PC-9 (cell line): ENCODE measurements at regions of chr5 and their contacts with region 1.

Region 1: DNA sequence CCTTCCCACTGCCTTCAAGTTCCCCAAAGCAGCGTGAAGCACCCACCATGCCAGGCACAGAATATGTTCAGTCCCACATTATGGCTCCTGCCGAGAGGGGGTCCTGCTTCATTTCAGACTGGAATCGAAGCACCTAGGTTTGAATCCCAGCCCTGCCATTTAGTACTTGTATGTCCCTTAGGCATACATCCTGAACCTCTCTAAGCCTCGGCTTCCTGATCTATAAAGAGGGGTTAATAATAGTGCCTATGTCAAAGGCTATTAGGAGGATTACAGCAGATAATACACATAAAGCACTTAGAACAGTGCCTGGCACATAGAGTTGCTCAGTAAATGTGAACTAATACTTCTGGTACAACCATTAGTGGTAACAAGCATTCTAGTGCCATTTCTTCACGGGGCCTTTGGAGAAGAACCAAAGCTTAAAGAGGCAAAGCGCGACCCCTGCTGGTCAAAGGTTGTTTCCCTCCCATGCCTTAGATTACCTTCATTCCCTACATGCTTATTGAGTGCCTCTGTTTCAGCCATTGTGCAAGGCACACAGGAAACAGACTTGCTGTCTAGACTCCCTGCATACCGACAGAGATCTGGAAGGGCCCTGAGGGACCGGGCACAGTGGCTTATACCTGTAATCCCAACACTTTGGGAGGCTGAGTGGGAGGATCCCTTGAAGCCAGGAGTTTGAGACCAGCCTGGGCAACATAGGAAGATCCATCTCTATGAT is 98.2 kb downstream of the PPARGC1B start:
- DNase-seq: peak; percentile 75 to 87
- H3K4me3 ChIP-seq: no peak overlapping the region
- H3K27ac ChIP-seq: no peak overlapping the region
- H3K4me1 ChIP-seq: no peaks in the 10 kb centered on the region
- H3K27me3 ChIP-seq: no peaks in the 10 kb centered on the region
- CTCF ChIP-seq: peak; percentile 93

Region 2: GRCh38 chr5:149367249-149367971 is 460.9 kb before region 1 on chr5:
- CTCF ChIA-PET with region 1: no interaction called
- POLR2A ChIA-PET with region 1: no interaction called
- intact Hi-C with region 1: loop called (anchors 2 kb)
- DNase-seq: peak; percentile 64 to 76
- H3K4me3 ChIP-seq: no peak overlapping the region
- H3K27ac ChIP-seq: no peak overlapping the region
- H3K4me1 ChIP-seq: no peaks in the 10 kb centered on the region
- H3K27me3 ChIP-seq: no peaks in the 10 kb centered on the region
- CTCF ChIP-seq: peak; percentile 84

Region 3: DNA sequence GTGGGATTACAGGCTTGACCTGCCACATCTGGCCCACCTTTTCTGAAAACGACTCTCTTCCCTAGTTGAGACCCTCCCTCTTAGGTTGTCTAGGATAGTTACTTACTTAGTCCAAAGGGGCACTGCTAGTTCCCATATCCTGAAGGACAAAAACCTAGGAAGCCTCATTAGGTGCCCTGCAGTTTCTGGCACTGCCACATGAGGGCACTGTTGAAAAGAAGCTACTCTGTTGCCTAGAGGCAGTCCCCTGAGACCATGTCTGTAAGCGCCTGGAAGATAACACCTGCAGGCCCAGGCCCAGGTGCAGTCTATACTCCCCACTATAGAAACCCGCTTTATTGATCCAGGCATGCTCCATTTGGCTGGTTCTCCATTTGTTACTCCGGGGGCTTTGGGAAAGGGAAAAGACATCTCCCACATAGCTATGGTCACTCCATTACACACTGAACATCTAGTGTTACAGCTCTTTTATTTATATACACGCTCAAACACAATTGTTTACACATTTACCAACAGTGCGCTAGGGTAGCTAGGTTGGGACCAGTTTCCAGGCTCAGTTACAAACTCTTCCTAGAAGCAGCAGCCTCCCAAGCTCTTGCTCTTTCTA is 171.6 kb before region 1 on chr5:
- CTCF ChIA-PET with region 1: interaction called, 4 read pairs
- POLR2A ChIA-PET with region 1: no interaction called
- intact Hi-C with region 1: loop called (anchors 1 kb)
- DNase-seq: peak in 1 of 2 experiments; percentile 48
- H3K4me3 ChIP-seq: no peak overlapping the region
- H3K27ac ChIP-seq: no peak overlapping the region
- H3K4me1 ChIP-seq: no peaks in the 10 kb centered on the region
- H3K27me3 ChIP-seq: no peaks in the 10 kb centered on the region
- CTCF ChIP-seq: peak; percentile 88

Region 4: GRCh38 chr5:149667084-149667828 is 161.1 kb before region 1 on chr5:
- CTCF ChIA-PET with region 1: interaction called, 5 read pairs
- POLR2A ChIA-PET with region 1: no interaction called
- intact Hi-C with region 1: loop called (anchors 1 kb)
- DNase-seq: peak in 1 of 2 experiments; percentile 18
- H3K4me3 ChIP-seq: no peak overlapping the region
- H3K27ac ChIP-seq: no peak overlapping the region
- H3K4me1 ChIP-seq: no peaks in the 10 kb centered on the region
- H3K27me3 ChIP-seq: no peaks in the 10 kb centered on the region
- CTCF ChIP-seq: peak; percentile 92

Region 5: DNA sequence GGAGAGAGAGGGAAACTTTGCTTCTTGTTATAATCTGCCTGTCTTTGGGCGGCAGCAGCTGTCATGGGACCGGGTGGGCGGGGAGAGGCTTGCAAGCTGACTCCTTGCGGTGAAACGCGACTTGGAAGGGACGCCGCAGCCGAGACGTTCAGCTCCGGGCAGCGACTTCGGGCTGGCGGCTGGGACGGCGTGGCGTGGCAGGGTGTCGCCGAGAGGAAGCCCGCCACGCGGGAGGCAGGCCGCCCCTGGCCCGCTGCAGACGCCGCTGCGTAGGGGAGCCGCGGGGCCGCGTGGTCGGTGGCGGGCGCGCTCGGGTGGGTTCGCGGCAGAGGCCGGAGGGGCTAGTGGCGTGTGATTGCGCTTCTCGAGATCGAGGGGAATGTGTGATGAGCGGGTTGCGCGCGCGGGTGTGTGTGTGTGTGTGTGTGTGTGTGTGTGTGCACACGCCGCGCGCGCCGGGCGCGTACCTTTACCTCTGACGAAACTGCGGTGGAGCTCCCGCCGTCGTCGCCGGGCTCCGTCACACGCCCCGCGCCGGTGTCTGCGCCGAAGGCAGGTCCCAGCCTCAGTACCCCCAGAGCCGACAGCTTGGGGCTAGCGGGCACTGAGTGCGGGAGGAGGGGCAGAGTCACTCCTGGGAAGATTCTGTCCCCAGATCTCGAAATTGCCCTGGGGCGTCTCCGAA is 96.5 kb before region 1 on chr5:
- CTCF ChIA-PET with region 1: no interaction called
- POLR2A ChIA-PET with region 1: interaction called, 5 read pairs
- intact Hi-C with region 1: loop called (anchors 1 kb)
- DNase-seq: peak; percentile 59 to 68
- H3K4me3 ChIP-seq: peak overlapping the region; percentile 94
- H3K27ac ChIP-seq: no peak overlapping the region
- H3K4me1 ChIP-seq: peaks cover 15% of the 10 kb centered on the region
- H3K27me3 ChIP-seq: no peaks in the 10 kb centered on the region
- CTCF ChIP-seq: no peak

Region 6: DNA sequence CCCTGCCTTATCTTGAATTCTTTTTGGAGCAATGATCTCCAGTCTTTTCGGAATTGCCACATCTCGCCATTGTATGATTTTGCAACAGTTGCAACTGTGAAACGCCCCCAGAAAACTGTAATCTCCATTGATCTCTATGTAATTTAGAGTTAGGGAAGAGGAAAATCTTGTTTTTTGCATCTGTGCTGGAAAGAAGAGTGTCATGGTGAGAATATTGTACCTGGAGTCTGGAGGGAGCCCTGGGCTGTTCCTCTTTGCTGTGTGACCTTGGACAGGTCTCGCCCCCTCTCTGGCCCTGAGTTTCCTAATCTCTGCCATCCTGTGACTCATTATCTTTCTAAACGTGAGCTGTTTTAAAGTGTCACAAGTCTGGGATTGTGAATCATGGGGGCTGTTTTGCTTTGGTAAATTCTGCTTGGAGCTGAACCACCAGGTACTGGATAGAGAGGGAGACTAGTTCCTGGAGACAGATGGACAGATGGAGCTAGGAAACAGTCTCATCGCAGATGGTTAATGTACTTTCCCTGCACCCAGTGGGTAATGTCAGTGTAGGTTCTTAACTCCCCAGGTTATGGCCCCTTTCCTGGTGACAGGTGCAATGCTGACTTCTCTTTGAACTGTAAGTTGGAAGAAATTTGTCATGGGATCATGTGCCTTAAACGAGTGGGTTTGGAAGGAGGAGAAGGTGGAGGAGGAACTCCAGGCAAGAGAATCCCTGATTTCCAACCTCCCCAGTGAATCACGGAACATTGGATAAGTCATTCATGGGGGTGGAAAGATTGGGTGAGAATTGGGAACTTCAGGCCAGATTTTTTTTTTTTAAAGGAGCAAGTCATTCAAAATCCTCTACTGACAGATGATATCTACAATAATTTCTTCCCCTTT is 78.6 kb before region 1 on chr5:
- CTCF ChIA-PET with region 1: interaction called, 3 read pairs
- POLR2A ChIA-PET with region 1: no interaction called
- intact Hi-C with region 1: loop called (anchors 5 kb)
- DNase-seq: peak in 1 of 2 experiments; percentile 48
- H3K4me3 ChIP-seq: no peak overlapping the region
- H3K27ac ChIP-seq: peak overlapping the region; percentile 24
- H3K4me1 ChIP-seq: peaks cover 59% of the 10 kb centered on the region
- H3K27me3 ChIP-seq: no peaks in the 10 kb centered on the region
- CTCF ChIP-seq: no peak

Region 7: GRCh38 chr5:149951135-149951749 is 122.9 kb after region 1 on chr5:
- CTCF ChIA-PET with region 1: interaction called, 10 read pairs
- POLR2A ChIA-PET with region 1: no interaction called
- intact Hi-C with region 1: no loop called
- DNase-seq: no peak
- H3K4me3 ChIP-seq: no peak overlapping the region
- H3K27ac ChIP-seq: no peak overlapping the region
- H3K4me1 ChIP-seq: peaks cover 8% of the 10 kb centered on the region; the same call in 1 of the 2 replicates
- H3K27me3 ChIP-seq: no peaks in the 10 kb centered on the region
- CTCF ChIP-seq: no peak